Heart right ventricle (tissue), 16 donors: ENCODE measurements at regions of chr3 and their contacts with region 1.

Region 1: GRCh38 chr3:88203642-88204055 is 53.9 kb downstream of the C3orf38 start:
- DNase-seq: peak; percentile 49 to 58
- ATAC-seq: peak; percentile 69 to 91 (median 88)
- H3K4me3 ChIP-seq: no peak overlapping the region
- H3K27ac ChIP-seq: no peak overlapping the region
- H3K4me1 ChIP-seq: peaks cover 0 to 7% (median 0%) of the 10 kb centered on the region in 9 donors
- H3K27me3 ChIP-seq: no peaks in the 10 kb centered on the region
- CTCF ChIP-seq: peak; percentile 70 to 90 (median 85)

Region 2: DNA sequence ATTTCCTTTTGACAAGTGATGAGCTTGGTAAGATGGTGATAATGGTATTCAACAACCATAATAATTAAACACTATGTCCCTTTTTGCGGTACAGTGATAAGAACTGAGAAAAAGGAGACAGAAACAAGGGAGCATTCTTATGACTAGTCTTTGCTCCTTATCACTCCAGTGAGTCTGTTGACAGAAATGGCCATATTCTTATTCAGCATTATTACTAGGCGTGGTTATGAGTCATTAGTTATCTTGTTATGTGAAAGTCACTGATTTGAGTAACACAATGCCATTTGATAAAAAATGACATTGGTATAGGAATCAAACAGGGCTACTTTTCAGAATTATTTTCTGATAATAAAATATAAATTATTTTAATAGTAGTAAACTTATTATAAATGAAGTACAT is 139.6 kb after region 1 on chr3:
- intact Hi-C with region 1: no loop called
- DNase-seq: no peak
- ATAC-seq: no peak
- H3K4me3 ChIP-seq: no peak overlapping the region
- H3K27ac ChIP-seq: no peak overlapping the region
- H3K4me1 ChIP-seq: no peaks in the 10 kb centered on the region
- H3K27me3 ChIP-seq: no peaks in the 10 kb centered on the region
- CTCF ChIP-seq: no peak

Region 3: GRCh38 chr3:89098964-89099585 is 895.4 kb after region 1 on chr3:
- intact Hi-C with region 1: loop called in 3 of 10 experiments (anchors 5 kb)
- DNase-seq: peak in 1 of 2 donors; percentile 16
- ATAC-seq: peak in 4 of 8 donors; percentile 49 to 58 (median 54)
- H3K4me3 ChIP-seq: no peak overlapping the region
- H3K27ac ChIP-seq: no peak overlapping the region
- H3K4me1 ChIP-seq: peaks cover 0 to 13% (median 0%) of the 10 kb centered on the region in 9 donors
- H3K27me3 ChIP-seq: no peaks in the 10 kb centered on the region
- CTCF ChIP-seq: peak; percentile 61 to 94 (median 86)

Region 4: DNA sequence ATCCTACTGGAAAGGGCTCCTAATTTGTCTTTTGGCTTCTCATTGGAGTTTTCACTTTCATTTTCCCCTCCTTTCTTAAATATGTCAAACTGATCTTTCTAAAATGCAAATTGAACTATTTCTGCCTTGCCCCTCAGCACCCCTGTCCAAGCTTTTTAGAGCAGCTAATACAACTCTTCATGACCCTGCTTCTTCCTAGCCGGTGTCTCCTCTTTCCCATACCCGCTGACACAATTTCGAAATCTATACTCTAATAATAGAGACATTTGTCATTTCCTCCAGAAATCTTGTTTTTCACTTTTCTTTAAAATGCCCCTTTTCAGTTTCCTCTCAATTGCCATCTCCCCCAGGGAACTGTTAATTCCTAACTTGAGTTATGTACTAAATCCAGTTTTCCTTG is 900.9 kb after region 1 on chr3:
- intact Hi-C with region 1: loop called in 3 of 10 experiments (anchors 5 kb)
- DNase-seq: no peak
- ATAC-seq: peak in 3 of 8 donors; percentile 26 to 54 (median 41)
- H3K4me3 ChIP-seq: peak overlapping the region in 5 of 10 donors; percentile 2 to 28 (median 14)
- H3K27ac ChIP-seq: peak overlapping the region in 7 of 10 donors; percentile 12 to 54 (median 35)
- H3K4me1 ChIP-seq: peaks cover 0 to 20% (median 5%) of the 10 kb centered on the region in 9 donors
- H3K27me3 ChIP-seq: peaks cover 0 to 31% (median 12%) of the 10 kb centered on the region in 7 donors
- CTCF ChIP-seq: no peak

Region 5: GRCh38 chr3:89113903-89114840 is 910.5 kb after region 1 on chr3:
- intact Hi-C with region 1: loop called in 3 of 10 experiments (anchors 10 kb)
- DNase-seq: peak; percentile 68 to 72
- ATAC-seq: peak; percentile 92 to 98 (median 95)
- H3K4me3 ChIP-seq: peak overlapping the region in 9 of 10 donors; percentile 42 to 63 (median 53)
- H3K27ac ChIP-seq: peak overlapping the region; percentile 16 to 76 (median 60)
- H3K4me1 ChIP-seq: peaks cover 0 to 5% (median 0%) of the 10 kb centered on the region in 9 donors
- H3K27me3 ChIP-seq: peaks cover 0 to 21% (median 16%) of the 10 kb centered on the region in 7 donors
- CTCF ChIP-seq: peak; percentile 32 to 83 (median 61)

Region 6: GRCh38 chr3:89851974-89852621 is 1648.4 kb after region 1 on chr3:
- intact Hi-C with region 1: loop called in 1 of 10 experiments (anchors 5 kb)
- DNase-seq: peak; percentile 10 to 23
- ATAC-seq: peak in 6 of 8 donors; percentile 29 to 63 (median 46)
- H3K4me3 ChIP-seq: no peak overlapping the region
- H3K27ac ChIP-seq: no peak overlapping the region
- H3K4me1 ChIP-seq: no peaks in the 10 kb centered on the region
- H3K27me3 ChIP-seq: no peaks in the 10 kb centered on the region
- CTCF ChIP-seq: peak in 8 of 9 donors; percentile 8 to 67 (median 50)

Region 7: DNA sequence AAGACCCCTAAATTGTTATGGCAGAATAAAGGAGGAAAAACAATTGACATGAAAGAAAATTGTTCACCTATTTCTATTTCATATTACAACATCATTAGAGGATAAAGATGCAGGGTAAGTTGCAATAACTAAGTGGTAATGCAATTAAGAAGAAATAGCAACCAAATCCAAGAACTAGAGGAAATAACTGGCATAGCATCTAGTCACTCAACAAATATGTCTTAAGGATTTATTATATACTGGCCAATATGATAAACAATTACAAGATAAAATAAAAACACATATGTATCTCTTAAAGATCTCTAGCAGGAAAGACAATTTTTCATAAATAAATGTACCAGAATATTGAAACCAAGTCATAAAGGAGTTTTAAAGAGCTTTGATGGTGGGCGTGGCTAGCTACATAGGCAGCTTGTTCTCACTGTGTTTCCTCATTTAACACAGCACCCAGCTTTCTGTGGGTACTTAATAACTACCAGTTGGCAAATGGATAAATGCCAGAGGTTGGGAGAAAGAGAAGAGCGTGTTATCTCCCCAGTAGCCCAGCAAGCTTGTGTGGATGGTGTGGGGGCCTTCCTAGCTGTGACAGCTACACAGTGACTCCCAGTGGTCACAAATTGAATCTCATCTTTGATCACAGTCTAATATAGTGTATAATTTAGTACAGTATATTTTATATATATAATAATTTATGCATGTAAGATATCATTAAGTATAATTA is 1887.7 kb after region 1 on chr3:
- intact Hi-C with region 1: loop called in 6 of 10 experiments (anchors 5 to 10 kb)
- DNase-seq: peak in 1 of 2 donors; percentile 17
- ATAC-seq: peak in 6 of 8 donors; percentile 64 to 78 (median 74)
- H3K4me3 ChIP-seq: no peak overlapping the region
- H3K27ac ChIP-seq: no peak overlapping the region
- H3K4me1 ChIP-seq: peaks cover 0 to 4% (median 0%) of the 10 kb centered on the region in 9 donors
- H3K27me3 ChIP-seq: no peaks in the 10 kb centered on the region
- CTCF ChIP-seq: peak; percentile 21 to 71 (median 52)

Region 8: GRCh38 chr3:90184861-90185260 is 1981.2 kb after region 1 on chr3:
- intact Hi-C with region 1: loop called in 9 of 10 experiments (anchors 5 to 10 kb)
- DNase-seq: no peak
- ATAC-seq: no peak
- H3K4me3 ChIP-seq: no peak overlapping the region
- H3K27ac ChIP-seq: no peak overlapping the region
- H3K4me1 ChIP-seq: peaks cover 0 to 5% (median 0%) of the 10 kb centered on the region in 9 donors
- H3K27me3 ChIP-seq: no peaks in the 10 kb centered on the region
- CTCF ChIP-seq: no peak